GM10248 (cell line): ENCODE measurements at regions of chr11 and their contacts with region 1.

Region 1: GRCh38 chr11:66868726-66869566 is 12.1 kb downstream of the LRFN4 start:
- DNase-seq: peak; percentile 94
- CTCF ChIP-seq: peak; percentile 68

Region 2: DNA sequence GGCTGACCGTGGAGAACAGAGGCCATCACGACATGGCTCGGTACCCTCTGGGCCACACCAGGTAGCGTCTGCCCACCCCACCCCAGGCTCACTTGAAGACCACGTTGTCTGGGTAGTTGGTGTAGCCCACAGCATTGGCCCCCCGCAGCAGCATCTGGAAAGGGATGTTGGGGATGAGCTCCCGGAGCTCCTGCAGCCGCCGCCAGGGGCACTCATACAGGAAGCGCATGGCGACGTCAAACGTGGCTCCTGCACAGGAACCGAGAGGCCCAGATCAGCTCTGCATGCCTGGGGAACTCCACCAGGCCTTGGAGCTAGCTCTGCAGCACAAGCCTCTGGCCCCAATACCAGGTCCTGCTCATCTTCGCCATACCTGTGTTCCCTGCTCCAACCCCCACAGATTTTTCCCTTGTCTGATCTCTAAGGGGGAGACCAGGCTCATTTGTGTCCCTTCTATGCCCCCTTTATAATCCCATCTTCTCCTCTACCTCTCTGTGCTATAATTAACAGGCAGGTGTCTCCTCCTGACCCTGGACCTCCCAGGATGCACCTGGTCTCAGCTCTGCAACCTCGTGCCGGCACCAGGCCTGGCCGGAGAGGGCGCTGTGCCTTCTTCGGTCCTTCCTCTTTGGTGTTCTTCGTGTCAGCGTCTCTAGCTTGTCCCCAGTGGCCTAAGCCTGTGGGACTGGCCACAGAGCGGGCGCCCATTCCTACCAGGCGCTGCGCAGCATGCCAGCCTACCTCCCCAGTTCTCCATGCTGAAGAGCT is 17.1 kb before region 1 on chr11:
- CTCF ChIA-PET with region 1: interaction called, 11 read pairs
- POLR2A ChIA-PET with region 1: interaction called, 3 read pairs
- DNase-seq: no peak
- CTCF ChIP-seq: peak; percentile 20

Region 3: DNA sequence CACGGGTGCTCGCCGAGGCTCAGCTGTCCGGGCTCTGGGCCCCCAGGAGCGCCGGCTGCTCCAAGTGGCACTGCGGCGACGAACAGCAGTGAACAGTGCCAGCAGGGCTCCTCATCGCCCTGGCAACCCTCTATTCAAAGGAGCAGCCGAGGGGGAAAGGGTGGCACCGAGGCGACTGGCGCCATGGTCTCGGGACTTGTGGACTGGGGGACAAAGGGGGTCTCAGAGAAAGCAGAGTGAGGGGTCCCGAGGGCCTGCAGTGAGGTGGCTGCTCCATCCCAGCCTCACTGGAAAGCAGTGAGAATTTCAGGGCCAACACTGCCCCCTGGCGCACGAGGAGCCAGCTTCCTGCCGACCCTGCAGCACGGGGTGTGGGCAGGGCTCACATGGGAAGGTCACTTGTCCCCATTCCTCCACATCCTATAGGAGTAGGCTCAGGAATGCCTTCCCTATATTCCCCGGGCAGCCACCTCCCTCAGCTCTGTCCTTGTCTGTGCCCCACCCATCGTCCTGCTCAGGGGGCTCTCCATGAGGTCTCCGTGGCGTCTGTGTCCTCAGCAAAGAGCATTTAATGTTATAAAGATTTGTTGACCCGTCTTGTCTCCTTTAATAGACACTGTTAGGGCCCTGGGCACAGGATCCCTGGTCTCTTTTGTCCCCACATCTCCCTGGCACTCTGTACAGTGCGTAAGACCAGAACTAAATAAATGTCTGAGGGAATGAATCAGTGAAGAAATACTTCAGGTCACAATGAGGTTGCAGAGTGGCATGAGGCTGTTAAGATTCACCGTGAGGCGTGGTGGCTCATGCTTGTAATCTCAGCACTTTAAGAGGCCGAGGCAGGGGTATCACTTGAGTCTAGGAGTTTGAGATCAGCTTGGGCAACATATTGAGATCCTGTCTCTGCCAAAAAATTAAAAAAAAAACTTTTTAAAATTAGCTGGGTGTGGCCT is 14.3 kb after region 1 on chr11:
- CTCF ChIA-PET with region 1: interaction called, 28 read pairs
- POLR2A ChIA-PET with region 1: no interaction called
- DNase-seq: peak; percentile 71
- CTCF ChIP-seq: peak; percentile 80